ENCODE measurements at regions of chr12 and their contacts with region 1.

Region 1: GRCh38 chr12:57031138-57031725 is 14.9 kb upstream of the TAC3 start:
- DNase-seq: no peak
- H3K4me3 ChIP-seq: no peak overlapping the region
- H3K27ac ChIP-seq: no peak overlapping the region
- H3K4me1 ChIP-seq: peaks cover 0 to 48% of the 10 kb centered on the region in 2 experiments; a peak in 2 of 4 replicates
- H3K27me3 ChIP-seq: peaks cover 5% of the 10 kb centered on the region; the same call in 1 of the 2 replicates
- CTCF ChIP-seq: no peak
- EP300 ChIP-seq: no peak
- RAD21 ChIP-seq: peak; percentile 43

Region 2: GRCh38 chr12:57012600-57013465 is 18.4 kb before region 1 on chr12:
- CTCF ChIA-PET with region 1: interaction called, 101 read pairs
- POLR2A ChIA-PET with region 1: interaction called, 3 read pairs
- DNase-seq: no peak
- H3K4me3 ChIP-seq: no peak overlapping the region
- H3K27ac ChIP-seq: no peak overlapping the region
- H3K4me1 ChIP-seq: peaks cover 0 to 8% of the 10 kb centered on the region in 2 experiments; a peak in 1 of 4 replicates
- H3K27me3 ChIP-seq: peaks cover 38% of the 10 kb centered on the region
- CTCF ChIP-seq: no peak
- EP300 ChIP-seq: no peak
- RAD21 ChIP-seq: peak; percentile 56

Measured in SK-N-SH (cell line).